Right cardiac atrium (tissue), 5 donors: ENCODE measurements at regions of chr13 and their contacts with region 1.

Region 1: GRCh38 chr13:48775804-48776203 is 122.1 kb downstream of the CYSLTR2 start:
- DNase-seq: no peak
- ATAC-seq: no peak
- H3K4me3 ChIP-seq: no peak overlapping the region
- H3K27ac ChIP-seq: no peak overlapping the region
- H3K4me1 ChIP-seq: peaks cover 2% of the 10 kb centered on the region
- H3K27me3 ChIP-seq: no peaks in the 10 kb centered on the region

Region 2: DNA sequence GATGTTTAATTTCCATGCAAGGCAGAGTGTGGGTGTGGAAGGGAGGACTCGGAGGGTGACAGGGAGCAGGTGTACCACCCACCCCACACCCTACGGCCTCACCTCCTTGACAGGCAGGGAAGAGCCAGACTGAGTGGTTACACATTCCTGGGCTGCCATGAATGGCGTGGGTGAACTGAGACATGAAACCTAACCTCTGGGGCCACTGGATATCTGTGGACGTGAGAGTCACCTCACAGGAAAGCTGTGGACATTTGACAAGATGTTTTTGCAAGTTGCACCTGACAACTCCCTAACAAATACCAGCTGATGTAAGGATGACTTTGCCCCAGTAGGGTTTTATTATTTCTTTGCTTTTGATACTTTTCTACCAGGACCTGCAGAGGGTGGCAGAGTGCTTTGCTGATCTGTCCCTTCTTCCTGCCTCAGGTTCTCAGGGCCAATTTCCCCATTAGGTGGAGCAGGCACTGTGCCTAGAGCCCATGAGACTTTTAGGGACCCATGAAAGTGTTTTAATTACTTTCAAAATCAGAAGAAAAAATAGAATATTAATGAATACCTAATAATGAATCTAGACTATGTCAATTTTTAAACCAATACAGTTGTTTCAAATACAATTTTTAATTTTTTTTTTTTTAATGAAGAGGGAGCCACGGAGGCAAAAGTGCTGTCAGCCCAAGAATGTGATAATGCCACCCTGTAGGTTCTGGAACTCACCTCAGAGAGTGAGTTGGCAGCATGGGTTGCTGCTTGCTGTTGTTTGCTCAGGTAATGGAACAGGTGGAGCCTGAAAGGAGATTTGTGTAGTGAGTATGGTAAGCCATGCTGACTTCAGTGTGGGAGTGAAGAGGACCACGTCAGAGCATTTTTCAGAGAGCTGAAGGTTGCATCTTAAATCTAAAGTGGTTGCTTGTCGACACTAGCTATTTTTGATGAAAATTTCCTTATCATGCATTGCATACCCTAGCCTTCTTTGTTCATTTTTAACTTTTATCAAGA is 180.1 kb before region 1 on chr13:
- intact Hi-C with region 1: loop called in 1 of 4 experiments (anchors 10 kb)
- DNase-seq: peak; percentile 63 to 75 (median 70)
- ATAC-seq: peak; percentile 92 to 93
- H3K4me3 ChIP-seq: no peak overlapping the region
- H3K27ac ChIP-seq: no peak overlapping the region
- H3K4me1 ChIP-seq: peaks cover 4% of the 10 kb centered on the region
- H3K27me3 ChIP-seq: no peaks in the 10 kb centered on the region